ENCODE measurements at regions of chr7 and their contacts with region 1.

Region 1: GRCh38 chr7:134766779-134767519 is 12.5 kb upstream of the CALD1 start:
- DNase-seq: no peak
- H3K4me3 ChIP-seq: no peak overlapping the region
- H3K27me3 ChIP-seq: no peaks in the 10 kb centered on the region
- CTCF ChIP-seq: no peak

Region 2: DNA sequence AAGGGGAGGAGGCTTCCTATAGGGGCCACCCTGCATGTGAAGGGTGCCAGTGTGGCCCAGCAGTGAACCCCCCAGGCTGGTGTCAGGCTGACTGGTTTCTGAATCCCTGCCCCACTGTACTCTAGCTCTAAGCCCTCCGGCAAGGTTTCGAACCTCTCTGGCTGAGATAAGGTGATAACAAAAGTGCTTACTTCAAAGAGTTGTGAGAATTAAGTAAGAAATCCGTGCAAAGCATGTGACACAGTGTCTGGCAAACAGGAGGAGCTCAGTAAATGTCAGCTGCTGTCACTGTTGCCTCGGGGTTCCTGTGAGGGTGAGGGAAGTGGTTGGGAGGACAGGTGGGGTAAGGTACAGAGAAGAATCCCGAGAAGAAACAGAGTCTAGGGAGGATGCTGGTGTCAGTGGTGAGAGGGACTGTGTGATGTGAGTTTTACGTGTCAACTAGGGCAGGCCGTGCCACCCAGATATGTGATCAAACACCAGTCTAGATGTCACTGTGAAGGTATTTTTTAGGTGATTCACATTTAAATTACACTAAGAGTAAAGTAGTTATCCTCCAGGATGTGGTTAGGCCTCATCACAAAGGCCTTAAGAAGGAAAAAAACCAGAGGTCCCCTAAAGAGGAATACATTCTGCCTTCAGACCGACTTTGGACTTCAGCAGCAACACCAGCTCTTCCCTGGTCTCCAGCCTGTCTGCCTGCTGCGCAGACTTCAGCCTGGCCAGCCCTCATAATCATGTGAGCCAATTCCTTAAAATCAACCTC is 55.9 kb before region 1 on chr7:
- CTCF ChIA-PET with region 1: interaction called, 3 read pairs
- POLR2A ChIA-PET with region 1: interaction called, 12 read pairs
- DNase-seq: no peak
- H3K4me3 ChIP-seq: no peak overlapping the region
- H3K27me3 ChIP-seq: no peaks in the 10 kb centered on the region
- CTCF ChIP-seq: no peak